OCI-LY7 (cell line): ENCODE measurements at regions of chr5 and their contacts with region 1.

Region 1: DNA sequence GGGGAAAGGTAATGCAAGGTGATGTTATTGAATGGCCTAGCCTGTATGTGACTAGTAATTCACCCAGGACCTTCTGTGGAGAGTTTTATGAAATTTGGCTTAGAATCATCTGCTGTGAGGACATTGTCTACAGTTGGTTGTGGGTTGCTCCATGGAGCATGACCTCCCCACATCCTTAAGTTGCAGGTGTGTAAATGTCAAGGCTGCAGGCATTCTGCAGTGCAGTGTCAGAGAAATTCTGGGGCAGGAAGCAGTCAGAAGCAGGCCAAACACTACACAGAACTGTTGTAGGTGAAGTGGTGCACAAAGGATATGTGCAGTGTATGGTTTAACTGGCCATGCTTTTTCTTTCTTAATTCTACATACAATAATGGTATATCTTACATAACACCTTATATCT is 588.3 kb downstream of the EBF1 start:
- DNase-seq: peak; percentile 98
- H3K4me3 ChIP-seq: peak overlapping the region; percentile 27
- H3K27ac ChIP-seq: peak overlapping the region; percentile 95
- H3K4me1 ChIP-seq: peaks cover 47% of the 10 kb centered on the region
- CTCF ChIP-seq: no peak

Region 2: DNA sequence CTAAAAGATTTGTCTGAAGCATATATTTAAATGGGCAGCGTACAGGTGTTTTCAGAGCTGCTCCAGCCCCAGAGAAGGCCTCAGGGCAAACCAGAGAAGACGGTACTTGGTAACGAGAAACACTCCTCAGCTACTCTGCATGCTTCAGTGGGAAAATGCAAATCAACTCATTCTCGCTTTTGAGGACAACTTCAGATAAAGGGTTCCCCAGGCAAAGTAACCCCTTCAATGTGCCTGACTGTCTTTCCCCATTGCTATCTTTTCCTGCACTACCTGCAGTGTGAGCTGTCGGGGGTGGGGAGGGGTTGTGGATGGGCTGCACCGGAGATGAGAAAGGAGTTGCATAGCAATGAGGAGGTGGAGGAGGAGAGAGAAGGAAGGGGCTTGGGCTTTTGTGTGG is 312.8 kb before region 1 on chr5:
- CTCF ChIA-PET with region 1: no interaction called
- POLR2A ChIA-PET with region 1: no interaction called
- intact Hi-C with region 1: loop called (anchors 2 kb)
- DNase-seq: peak; percentile 91
- H3K4me3 ChIP-seq: peak overlapping the region; percentile 44
- H3K27ac ChIP-seq: peak overlapping the region; percentile 87
- H3K4me1 ChIP-seq: peaks cover 78% of the 10 kb centered on the region
- CTCF ChIP-seq: no peak

Region 3: GRCh38 chr5:158209219-158209908 is 302.1 kb before region 1 on chr5:
- CTCF ChIA-PET with region 1: no interaction called
- POLR2A ChIA-PET with region 1: no interaction called
- intact Hi-C with region 1: no loop called
- DNase-seq: no peak
- H3K4me3 ChIP-seq: no peak overlapping the region
- H3K27ac ChIP-seq: no peak overlapping the region
- H3K4me1 ChIP-seq: no peaks in the 10 kb centered on the region
- CTCF ChIP-seq: no peak

Region 4: DNA sequence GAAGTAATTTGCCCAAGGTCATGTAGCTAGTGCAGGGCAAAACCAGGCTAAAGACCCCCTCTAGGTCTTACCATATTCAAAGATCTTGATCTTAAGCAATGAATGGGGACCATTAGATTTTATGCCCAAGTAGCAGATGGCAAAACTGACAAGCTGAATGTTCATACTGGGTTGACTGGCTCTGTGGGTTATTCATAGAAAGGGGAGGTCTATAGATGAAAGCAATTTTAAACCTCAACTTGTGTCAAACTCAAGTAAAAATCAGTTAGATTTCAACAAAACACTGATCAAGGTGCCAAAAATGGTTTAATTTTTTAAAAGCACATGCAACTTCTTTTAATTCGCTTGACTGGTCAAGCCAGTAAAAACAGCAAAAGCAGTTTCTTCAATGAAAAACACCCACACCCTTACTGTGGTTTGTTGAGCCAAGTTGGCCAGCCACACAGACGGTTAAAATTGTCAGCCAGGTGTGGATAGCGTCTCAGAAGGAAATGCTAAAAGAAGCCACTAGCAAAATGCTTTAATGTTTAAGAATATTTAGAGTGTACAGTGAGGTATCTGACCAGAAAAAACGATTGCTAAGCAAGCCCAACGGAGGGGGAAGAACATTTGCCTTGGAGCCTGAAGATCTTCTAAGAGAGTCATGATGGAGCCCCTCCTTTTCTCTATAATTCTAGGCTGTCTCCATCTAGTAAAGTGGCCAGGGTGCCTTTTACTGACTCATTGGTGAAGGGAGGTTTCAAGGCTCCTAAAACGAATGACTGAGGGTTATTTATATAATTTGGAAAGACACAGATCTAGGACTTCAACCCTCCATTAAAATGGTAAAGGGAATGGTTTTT is 112.9 kb before region 1 on chr5:
- CTCF ChIA-PET with region 1: no interaction called
- POLR2A ChIA-PET with region 1: interaction called, 3 read pairs
- intact Hi-C with region 1: loop called (anchors 1 kb)
- DNase-seq: peak; percentile 99
- H3K4me3 ChIP-seq: peak overlapping the region; percentile 31
- H3K27ac ChIP-seq: peak overlapping the region; percentile 95
- H3K4me1 ChIP-seq: peaks cover 54% of the 10 kb centered on the region
- CTCF ChIP-seq: no peak

Region 5: GRCh38 chr5:158468444-158468843 is 43.0 kb before region 1 on chr5:
- CTCF ChIA-PET with region 1: no interaction called
- POLR2A ChIA-PET with region 1: no interaction called
- intact Hi-C with region 1: no loop called
- DNase-seq: no peak
- H3K4me3 ChIP-seq: no peak overlapping the region
- H3K27ac ChIP-seq: no peak overlapping the region
- H3K4me1 ChIP-seq: peaks cover 28% of the 10 kb centered on the region
- CTCF ChIP-seq: no peak

Region 6: GRCh38 chr5:158484150-158484549 is 27.3 kb before region 1 on chr5:
- CTCF ChIA-PET with region 1: no interaction called
- POLR2A ChIA-PET with region 1: interaction called, 13 read pairs
- intact Hi-C with region 1: no loop called
- DNase-seq: no peak
- H3K4me3 ChIP-seq: no peak overlapping the region
- H3K27ac ChIP-seq: no peak overlapping the region
- H3K4me1 ChIP-seq: peaks cover 10% of the 10 kb centered on the region
- CTCF ChIP-seq: no peak

Region 7: DNA sequence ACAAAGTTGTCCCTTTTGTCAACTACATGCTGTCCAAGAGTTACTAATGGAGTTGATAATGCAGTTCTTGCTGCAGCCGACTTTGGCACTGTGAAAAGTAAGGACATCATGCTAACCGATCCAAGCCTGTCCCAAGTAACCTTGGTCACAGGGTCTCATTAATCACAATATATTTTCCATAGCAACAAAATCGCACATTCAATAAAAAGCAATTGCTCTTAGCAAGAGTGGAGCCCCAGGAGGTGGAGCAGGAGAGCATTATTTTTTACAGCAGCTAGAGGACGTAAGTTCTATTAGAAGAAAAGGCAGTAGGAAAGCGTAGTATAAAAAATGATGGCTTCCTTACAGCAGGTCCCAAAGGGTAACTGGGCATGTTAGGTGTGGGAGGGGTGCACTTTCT is 18.0 kb after region 1 on chr5:
- CTCF ChIA-PET with region 1: no interaction called
- POLR2A ChIA-PET with region 1: interaction called, 10 read pairs
- intact Hi-C with region 1: no loop called
- DNase-seq: no peak
- H3K4me3 ChIP-seq: no peak overlapping the region
- H3K27ac ChIP-seq: no peak overlapping the region
- H3K4me1 ChIP-seq: no peaks in the 10 kb centered on the region
- CTCF ChIP-seq: peak; percentile 48

Region 8: GRCh38 chr5:158573829-158574228 is 62.4 kb after region 1 on chr5:
- CTCF ChIA-PET with region 1: no interaction called
- POLR2A ChIA-PET with region 1: no interaction called
- intact Hi-C with region 1: no loop called
- DNase-seq: no peak
- H3K4me3 ChIP-seq: no peak overlapping the region
- H3K27ac ChIP-seq: no peak overlapping the region
- H3K4me1 ChIP-seq: peaks cover 12% of the 10 kb centered on the region
- CTCF ChIP-seq: no peak